ENCODE measurements at regions of chr17 and their contacts with region 1.

Region 1: DNA sequence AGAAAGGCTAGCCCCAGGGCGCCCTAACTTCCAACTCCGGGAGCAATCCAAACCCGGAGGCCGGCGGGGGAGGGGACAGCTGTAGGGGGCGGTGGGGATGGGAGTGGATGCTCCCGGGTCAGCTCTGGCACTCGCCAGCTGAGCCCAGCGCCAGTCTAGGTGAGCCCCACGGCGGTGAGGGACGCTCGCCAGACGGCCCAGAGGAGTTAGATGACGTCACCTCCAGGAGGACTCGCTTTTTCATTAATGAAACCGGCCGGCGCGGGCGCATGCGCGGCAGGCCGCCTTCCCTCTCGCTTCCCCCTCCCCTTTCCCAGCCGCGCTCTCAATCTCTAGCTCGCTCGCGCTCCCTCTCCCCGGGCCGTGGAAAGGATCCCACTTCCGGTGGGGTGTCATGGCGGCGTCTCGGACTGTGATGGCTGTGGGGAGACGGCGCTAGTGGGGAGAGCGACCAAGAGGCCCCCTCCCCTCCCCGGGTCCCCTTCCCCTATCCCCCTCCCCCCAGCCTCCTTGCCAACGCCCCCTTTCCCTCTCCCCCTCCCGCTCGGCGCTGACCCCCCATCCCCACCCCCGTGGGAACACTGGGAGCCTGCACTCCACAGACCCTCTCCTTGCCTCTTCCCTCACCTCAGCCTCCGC is at the start of gene NF1:
- DNase-seq: peak; percentile 95 to 98 (median 97)
- ATAC-seq: peak; percentile 92 to 98 (median 98)
- H3K4me3 ChIP-seq: peak within 1 kb of the TSS; percentile 59 to 99 (median 89)
- H3K27ac ChIP-seq: peak within 1 kb of the TSS; percentile 76 to 97 (median 94)
- H3K4me1 ChIP-seq: peaks cover 0 to 17% (median 6%) of the 10 kb centered on the region in 12 donors
- H3K27me3 ChIP-seq: no peaks in the 10 kb centered on the region
- CTCF ChIP-seq: no peak
- POLR2A ChIP-seq: peak in 1 of 2 donors; percentile 44
- total RNA-seq, gene NF1: 43.8 to 82.0 (median 55.2) TPM

Region 2: GRCh38 chr17:31015639-31016038 is 79.1 kb before region 1 on chr17:
- intact Hi-C with region 1: loop called in 1 of 10 experiments (anchors 5 kb)
- DNase-seq: no peak
- ATAC-seq: peak in 1 of 4 donors; percentile 54
- H3K4me3 ChIP-seq: no peak overlapping the region
- H3K27ac ChIP-seq: no peak overlapping the region
- H3K4me1 ChIP-seq: peaks cover 0 to 14% (median 2%) of the 10 kb centered on the region in 12 donors
- H3K27me3 ChIP-seq: no peaks in the 10 kb centered on the region
- CTCF ChIP-seq: peak in 5 of 12 donors; percentile 6 to 24 (median 13)
- POLR2A ChIP-seq: no peak

Region 3: DNA sequence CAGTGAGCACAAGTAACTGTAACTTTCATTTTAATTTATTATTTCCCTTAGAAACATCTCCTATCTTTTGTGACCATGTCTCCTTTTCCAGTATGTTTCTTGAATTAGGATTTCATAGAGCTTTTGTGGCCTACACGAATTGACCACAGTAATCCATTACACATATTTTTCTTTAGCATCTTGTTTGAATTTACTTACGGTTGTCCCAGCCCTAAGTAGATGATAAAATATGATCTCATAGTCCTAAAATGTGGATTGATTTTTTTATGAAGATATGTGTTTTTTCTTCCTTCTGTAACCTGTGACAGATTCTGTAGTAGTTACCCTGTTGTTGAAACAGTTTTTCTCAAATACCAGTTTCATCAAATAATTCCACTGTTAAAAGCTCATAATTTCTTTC is 61.6 kb after region 1 on chr17:
- intact Hi-C with region 1: loop called in 1 of 10 experiments (anchors 10 kb)
- DNase-seq: no peak
- ATAC-seq: no peak
- H3K4me3 ChIP-seq: no peak overlapping the region
- H3K27ac ChIP-seq: no peak overlapping the region
- H3K4me1 ChIP-seq: peaks cover 0 to 9% (median 0%) of the 10 kb centered on the region in 12 donors
- H3K27me3 ChIP-seq: no peaks in the 10 kb centered on the region
- CTCF ChIP-seq: no peak
- POLR2A ChIP-seq: no peak

Region 4: GRCh38 chr17:31202968-31203367 is 108.2 kb after region 1 on chr17:
- intact Hi-C with region 1: loop called in 1 of 10 experiments (anchors 10 kb)
- DNase-seq: no peak
- ATAC-seq: peak in 2 of 4 donors; percentile 50 to 55
- H3K4me3 ChIP-seq: no peak overlapping the region
- H3K27ac ChIP-seq: no peak overlapping the region
- H3K4me1 ChIP-seq: peaks cover 0 to 19% (median 0%) of the 10 kb centered on the region in 12 donors
- H3K27me3 ChIP-seq: no peaks in the 10 kb centered on the region
- CTCF ChIP-seq: no peak
- POLR2A ChIP-seq: no peak

Measured in heart left ventricle (tissue), 16 donors.